ENCODE measurements at regions of chr17 and their contacts with region 1.

Region 1: DNA sequence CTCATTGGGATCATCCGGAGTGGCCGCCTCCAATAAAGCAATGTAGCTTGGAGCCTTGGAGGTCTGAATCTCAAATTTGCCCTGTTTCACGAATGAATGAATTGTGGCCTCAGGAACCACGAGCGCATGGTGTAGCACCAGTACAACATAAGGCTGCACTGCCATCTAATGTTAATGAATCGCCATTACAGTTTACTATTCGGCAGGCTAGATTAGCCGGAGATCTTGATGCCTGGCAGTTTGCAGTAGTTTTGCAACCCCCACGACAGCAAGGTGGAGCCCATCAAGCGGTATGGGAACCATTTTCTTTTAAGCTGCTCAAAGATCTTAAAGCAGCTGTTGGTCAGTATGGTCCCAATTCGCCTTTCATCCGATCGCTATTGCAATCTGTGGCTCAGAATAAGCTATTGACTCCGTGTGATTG is 18.8 kb downstream of the ALOX15B start:
- DNase-seq: peak; percentile 80
- H3K4me3 ChIP-seq: peak overlapping the region; percentile 29 to 50; a peak in 3 of 4 replicates
- H3K27ac ChIP-seq: no peak overlapping the region
- H3K4me1 ChIP-seq: peaks cover 4 to 7% of the 10 kb centered on the region in 2 experiments; a peak in 2 of 4 replicates
- H3K27me3 ChIP-seq: peaks cover 33% of the 10 kb centered on the region
- CTCF ChIP-seq: peak; percentile 75
- EP300 ChIP-seq: no peak
- RAD21 ChIP-seq: peak; percentile 91

Region 2: GRCh38 chr17:7740481-7741001 is 317.2 kb before region 1 on chr17:
- CTCF ChIA-PET with region 1: interaction called, 18 read pairs
- POLR2A ChIA-PET with region 1: no interaction called
- DNase-seq: no peak
- H3K4me3 ChIP-seq: no peak overlapping the region
- H3K27ac ChIP-seq: no peak overlapping the region
- H3K4me1 ChIP-seq: peaks cover 0 to 2% of the 10 kb centered on the region in 2 experiments; a peak in 2 of 4 replicates
- H3K27me3 ChIP-seq: peaks cover 19% of the 10 kb centered on the region
- CTCF ChIP-seq: no peak
- EP300 ChIP-seq: no peak
- RAD21 ChIP-seq: no peak

Region 3: GRCh38 chr17:7915611-7916382 is 141.9 kb before region 1 on chr17 and contains the start of gene RNF227:
- CTCF ChIA-PET with region 1: interaction called, 20 read pairs
- POLR2A ChIA-PET with region 1: interaction called, 3 read pairs
- DNase-seq: peak; percentile 93
- H3K4me3 ChIP-seq: peak within 1 kb of the TSS; percentile 57 to 62
- H3K27ac ChIP-seq: peak within 1 kb of the TSS; percentile 60 to 90
- H3K4me1 ChIP-seq: peaks cover 14 to 18% of the 10 kb centered on the region in 2 experiments; a peak in 2 of 4 replicates
- H3K27me3 ChIP-seq: no peaks in the 10 kb centered on the region
- CTCF ChIP-seq: no peak
- EP300 ChIP-seq: no peak
- RAD21 ChIP-seq: peak; percentile 11; the same call in 1 of the 2 replicates
- polyA plus RNA-seq, gene RNF227: 7.4 and 9.0 TPM in 2 replicates

Region 4: GRCh38 chr17:7997186-7997585 is 60.5 kb before region 1 on chr17:
- CTCF ChIA-PET with region 1: interaction called, 117 read pairs
- POLR2A ChIA-PET with region 1: no interaction called
- DNase-seq: no peak
- H3K4me3 ChIP-seq: no peak overlapping the region
- H3K27ac ChIP-seq: no peak overlapping the region
- H3K4me1 ChIP-seq: peaks cover 0 to 2% of the 10 kb centered on the region in 2 experiments; a peak in 1 of 4 replicates
- H3K27me3 ChIP-seq: peaks cover 12% of the 10 kb centered on the region; the same call in 1 of the 2 replicates
- CTCF ChIP-seq: 0 out of 2 replicates have a peak, but pooled peaks have one; percentile 36
- EP300 ChIP-seq: no peak
- RAD21 ChIP-seq: no peak

Region 5: GRCh38 chr17:8041249-8041928 is 16.3 kb before region 1 on chr17:
- CTCF ChIA-PET with region 1: interaction called, 143 read pairs
- POLR2A ChIA-PET with region 1: no interaction called
- DNase-seq: peak; percentile 73
- H3K4me3 ChIP-seq: no peak overlapping the region
- H3K27ac ChIP-seq: peak overlapping the region in 1 of 2 experiments; percentile 53; a peak in 2 of 4 replicates
- H3K4me1 ChIP-seq: peaks cover 5 to 8% of the 10 kb centered on the region in 2 experiments; a peak in 2 of 4 replicates
- H3K27me3 ChIP-seq: peaks cover 6% of the 10 kb centered on the region
- CTCF ChIP-seq: peak; percentile 76
- EP300 ChIP-seq: no peak
- RAD21 ChIP-seq: peak; percentile 86

Region 6: DNA sequence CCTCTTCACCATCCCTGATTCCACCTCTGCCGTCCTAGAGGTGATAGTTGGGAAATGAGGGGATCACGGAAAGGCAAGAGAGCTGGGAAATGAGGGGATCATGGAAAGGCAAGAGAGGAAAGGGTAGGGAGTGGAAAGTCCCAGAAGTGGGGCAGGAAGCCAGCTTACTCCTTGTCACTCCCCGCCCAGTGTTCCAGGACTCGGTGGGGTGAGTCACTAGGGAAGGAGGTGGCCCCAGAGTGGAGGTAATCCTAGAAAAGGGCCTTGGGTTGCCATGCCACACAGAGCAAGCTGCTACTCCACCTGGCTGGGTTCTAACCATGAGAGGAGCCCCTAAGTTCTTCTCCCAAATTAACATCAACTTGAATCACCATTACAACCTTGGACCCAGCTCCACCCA is 45.8 kb after region 1 on chr17:
- CTCF ChIA-PET with region 1: interaction called, 118 read pairs
- POLR2A ChIA-PET with region 1: no interaction called
- DNase-seq: no peak
- H3K4me3 ChIP-seq: no peak overlapping the region
- H3K27ac ChIP-seq: no peak overlapping the region
- H3K4me1 ChIP-seq: no peaks in the 10 kb centered on the region
- H3K27me3 ChIP-seq: no peaks in the 10 kb centered on the region
- CTCF ChIP-seq: no peak
- EP300 ChIP-seq: no peak
- RAD21 ChIP-seq: no peak

Region 7: GRCh38 chr17:8147141-8147804 is 89.6 kb after region 1 on chr17:
- CTCF ChIA-PET with region 1: no interaction called
- POLR2A ChIA-PET with region 1: no interaction called
- DNase-seq: no peak
- H3K4me3 ChIP-seq: no peak overlapping the region
- H3K27ac ChIP-seq: no peak overlapping the region
- H3K4me1 ChIP-seq: peaks cover 7% of the 10 kb centered on the region in 2 experiments; a peak in 2 of 4 replicates
- H3K27me3 ChIP-seq: no peaks in the 10 kb centered on the region
- CTCF ChIP-seq: no peak
- EP300 ChIP-seq: no peak
- RAD21 ChIP-seq: no peak

Region 8: GRCh38 chr17:8222630-8223356 is 165.1 kb after region 1 on chr17:
- CTCF ChIA-PET with region 1: interaction called, 12 read pairs
- POLR2A ChIA-PET with region 1: interaction called, 4 read pairs
- DNase-seq: peak; percentile 76
- H3K4me3 ChIP-seq: peak overlapping the region; percentile 83 to 86
- H3K27ac ChIP-seq: peak overlapping the region; percentile 92 to 95
- H3K4me1 ChIP-seq: peaks cover 8 to 22% of the 10 kb centered on the region in 2 experiments; a peak in 3 of 4 replicates
- H3K27me3 ChIP-seq: no peaks in the 10 kb centered on the region
- CTCF ChIP-seq: no peak
- EP300 ChIP-seq: no peak
- RAD21 ChIP-seq: no peak

Measured in SK-N-SH (cell line).